PC-9 (cell line): ENCODE measurements at regions of chr4 and their contacts with region 1.

Region 1: GRCh38 chr4:44806071-44806470 is 79.7 kb upstream of the GNPDA2 start:
- DNase-seq: no peak
- H3K4me3 ChIP-seq: no peak overlapping the region
- H3K27ac ChIP-seq: no peak overlapping the region
- H3K4me1 ChIP-seq: no peaks in the 10 kb centered on the region
- H3K27me3 ChIP-seq: no peaks in the 10 kb centered on the region
- CTCF ChIP-seq: no peak

Region 2: DNA sequence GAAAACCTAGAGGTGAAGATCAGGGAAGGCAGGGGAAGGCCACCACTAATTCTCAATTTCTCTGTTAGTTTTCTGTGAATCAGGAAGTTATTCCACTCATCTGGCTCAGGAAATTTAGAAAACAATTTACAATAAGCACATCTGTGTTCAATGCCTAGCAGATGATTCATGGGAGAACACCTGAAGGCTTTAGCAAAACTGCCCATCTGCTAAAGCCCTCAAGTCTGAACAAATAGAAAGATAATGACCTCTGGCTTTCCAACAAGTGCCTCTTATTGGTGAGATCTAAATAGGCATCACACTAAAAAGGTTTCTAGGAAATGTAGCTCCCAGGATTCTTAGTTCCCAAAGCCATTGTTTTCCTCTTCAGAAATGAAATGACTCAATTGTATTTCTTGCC is 42.4 kb after region 1 on chr4:
- CTCF ChIA-PET with region 1: no interaction called
- POLR2A ChIA-PET with region 1: no interaction called
- intact Hi-C with region 1: loop called (anchors 5 kb)
- DNase-seq: no peak
- H3K4me3 ChIP-seq: no peak overlapping the region
- H3K27ac ChIP-seq: no peak overlapping the region
- H3K4me1 ChIP-seq: no peaks in the 10 kb centered on the region
- H3K27me3 ChIP-seq: no peaks in the 10 kb centered on the region
- CTCF ChIP-seq: no peak